ENCODE measurements at regions of chr3 and their contacts with region 1.

Region 1: DNA sequence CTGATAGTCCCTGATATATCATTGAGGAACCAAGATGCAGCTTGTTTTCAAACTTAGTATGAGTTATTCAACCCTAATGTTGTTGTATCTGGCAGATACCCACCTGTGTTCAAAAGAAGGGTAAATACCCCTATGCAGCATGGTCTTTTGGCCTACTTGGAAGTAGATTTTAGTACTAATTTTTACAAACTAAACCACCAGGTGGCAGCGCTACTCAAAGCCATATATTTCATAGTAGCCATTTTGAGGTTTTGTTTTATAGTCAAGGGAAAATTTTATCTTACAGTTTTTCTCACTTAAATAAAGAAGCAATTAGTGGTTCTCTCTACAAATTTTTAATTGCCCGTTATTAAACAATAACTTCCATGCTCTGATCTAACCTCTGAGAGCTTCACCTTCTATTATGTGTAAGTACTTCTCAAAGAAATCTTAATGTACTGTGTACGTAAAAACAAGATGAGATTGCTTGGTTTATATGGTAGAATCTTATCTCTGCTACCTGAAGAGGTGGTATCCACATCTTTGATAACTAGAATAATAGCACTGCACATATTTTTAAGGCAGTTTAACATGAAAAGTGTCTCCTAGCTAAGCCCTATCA is 31.5 kb upstream of the MLF1 start:
- DNase-seq: no peak
- H3K4me3 ChIP-seq: no peak overlapping the region
- H3K27ac ChIP-seq: no peak overlapping the region
- H3K4me1 ChIP-seq: no peaks in the 10 kb centered on the region
- H3K27me3 ChIP-seq: no peaks in the 10 kb centered on the region
- CTCF ChIP-seq: peak in 2 of 3 experiments; percentile 34 to 46; a peak in 2 of 4 replicates
- EP300 ChIP-seq: no peak
- POLR2A ChIP-seq: no peak
- RAD21 ChIP-seq: peak; percentile 51 to 53

Region 2: GRCh38 chr3:158560979-158561378 is 21.5 kb after region 1 on chr3:
- CTCF ChIA-PET with region 1: interaction called, 13 read pairs
- POLR2A ChIA-PET with region 1: no interaction called
- DNase-seq: no peak
- H3K4me3 ChIP-seq: no peak overlapping the region
- H3K27ac ChIP-seq: no peak overlapping the region
- H3K4me1 ChIP-seq: no peaks in the 10 kb centered on the region
- H3K27me3 ChIP-seq: no peaks in the 10 kb centered on the region
- CTCF ChIP-seq: no peak
- EP300 ChIP-seq: no peak
- POLR2A ChIP-seq: no peak
- RAD21 ChIP-seq: no peak

Region 3: GRCh38 chr3:158570999-158571974 is 31.8 kb after region 1 on chr3 and contains the start of gene MLF1:
- CTCF ChIA-PET with region 1: interaction called, 15 read pairs
- POLR2A ChIA-PET with region 1: no interaction called
- DNase-seq: peak; percentile 86 to 98
- H3K4me3 ChIP-seq: peak within 1 kb of the TSS; percentile 38 to 66 (median 60)
- H3K27ac ChIP-seq: no peak within 1 kb of the TSS
- H3K4me1 ChIP-seq: peaks cover 0 to 15% (median 3%) of the 10 kb centered on the region in 4 experiments; a peak in 2 of 7 replicates
- H3K27me3 ChIP-seq: peaks cover 0 to 13% (median 10%) of the 10 kb centered on the region in 4 experiments; a peak in 5 of 7 replicates
- CTCF ChIP-seq: no peak
- EP300 ChIP-seq: peak; percentile 46 to 78; a peak in 2 of 3 replicates
- POLR2A ChIP-seq: peak; percentile 78 to 86
- RAD21 ChIP-seq: no peak
- total RNA-seq, gene MLF1: 39.1 and 48.9 TPM in 2 replicates

Measured in H1 (cell line).